HEK293 (cell line): ENCODE measurements at regions of chr7 and their contacts with region 1.

Region 1: DNA sequence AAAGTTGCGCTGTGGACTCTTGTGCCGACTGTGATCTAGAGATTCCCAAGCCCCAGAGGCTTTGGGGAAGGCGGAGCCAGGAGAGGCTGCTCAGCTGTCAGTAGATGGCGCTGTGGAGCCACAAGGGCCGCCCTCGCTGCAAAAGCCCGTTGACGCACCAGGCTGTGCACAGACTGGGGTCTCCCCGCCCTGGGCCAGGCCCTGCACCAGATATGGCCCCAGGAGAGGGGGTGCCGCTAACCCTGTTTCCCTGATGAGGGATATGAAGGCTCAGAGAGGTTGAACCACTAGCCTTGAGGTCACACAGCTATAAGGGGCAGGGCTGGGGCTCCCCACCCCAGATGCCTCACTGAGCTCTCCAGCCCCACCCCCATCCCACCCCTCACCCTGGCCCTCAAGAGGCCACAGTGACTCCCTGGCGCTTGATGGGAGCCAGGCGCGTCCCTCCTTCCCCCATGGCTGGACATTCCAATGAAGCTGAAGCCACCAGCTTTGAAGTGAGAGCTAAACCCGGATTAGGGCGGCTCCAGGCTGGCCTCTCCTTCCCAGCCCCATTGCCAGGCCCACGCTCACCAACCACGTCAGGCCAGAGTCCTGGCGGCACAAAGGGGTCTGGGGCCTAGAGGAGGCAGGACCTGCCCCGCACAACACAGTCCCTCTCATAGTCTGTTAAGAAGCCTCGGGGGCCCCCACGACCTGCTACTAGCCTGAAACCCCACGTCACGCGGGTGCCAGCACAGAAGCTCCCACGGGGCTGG is 26.4 kb downstream of the MYL10 start:
- H3K4me3 ChIP-seq: no peak overlapping the region
- H3K27ac ChIP-seq: no peak overlapping the region
- H3K4me1 ChIP-seq: no peaks in the 10 kb centered on the region
- CTCF ChIP-seq: peak; percentile 68; the same call in 1 of the 2 replicates

Region 2: DNA sequence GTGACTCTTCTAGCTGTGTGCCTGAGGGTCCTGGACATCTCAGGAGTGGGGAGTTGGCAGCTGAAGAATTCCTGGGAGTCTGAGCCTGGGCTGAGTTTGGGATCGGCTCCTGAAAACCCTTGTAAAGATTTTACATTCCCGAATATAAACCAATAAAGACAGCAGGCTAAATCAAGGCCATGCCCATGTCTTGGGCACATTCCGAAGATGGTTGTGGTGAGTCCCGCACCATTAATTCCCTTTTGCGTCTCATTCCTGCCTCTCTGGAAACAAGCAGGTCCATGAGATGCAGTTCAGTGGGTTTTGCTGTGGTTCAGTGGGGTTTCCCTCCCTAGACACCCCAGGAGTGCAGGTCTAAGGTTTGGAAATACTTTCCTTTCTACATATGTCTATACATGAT is 149.0 kb before region 1 on chr7:
- CTCF ChIA-PET with region 1: no interaction called
- POLR2A ChIA-PET with region 1: no interaction called
- H3K4me3 ChIP-seq: no peak overlapping the region
- H3K27ac ChIP-seq: no peak overlapping the region
- H3K4me1 ChIP-seq: no peaks in the 10 kb centered on the region
- CTCF ChIP-seq: no peak

Region 3: DNA sequence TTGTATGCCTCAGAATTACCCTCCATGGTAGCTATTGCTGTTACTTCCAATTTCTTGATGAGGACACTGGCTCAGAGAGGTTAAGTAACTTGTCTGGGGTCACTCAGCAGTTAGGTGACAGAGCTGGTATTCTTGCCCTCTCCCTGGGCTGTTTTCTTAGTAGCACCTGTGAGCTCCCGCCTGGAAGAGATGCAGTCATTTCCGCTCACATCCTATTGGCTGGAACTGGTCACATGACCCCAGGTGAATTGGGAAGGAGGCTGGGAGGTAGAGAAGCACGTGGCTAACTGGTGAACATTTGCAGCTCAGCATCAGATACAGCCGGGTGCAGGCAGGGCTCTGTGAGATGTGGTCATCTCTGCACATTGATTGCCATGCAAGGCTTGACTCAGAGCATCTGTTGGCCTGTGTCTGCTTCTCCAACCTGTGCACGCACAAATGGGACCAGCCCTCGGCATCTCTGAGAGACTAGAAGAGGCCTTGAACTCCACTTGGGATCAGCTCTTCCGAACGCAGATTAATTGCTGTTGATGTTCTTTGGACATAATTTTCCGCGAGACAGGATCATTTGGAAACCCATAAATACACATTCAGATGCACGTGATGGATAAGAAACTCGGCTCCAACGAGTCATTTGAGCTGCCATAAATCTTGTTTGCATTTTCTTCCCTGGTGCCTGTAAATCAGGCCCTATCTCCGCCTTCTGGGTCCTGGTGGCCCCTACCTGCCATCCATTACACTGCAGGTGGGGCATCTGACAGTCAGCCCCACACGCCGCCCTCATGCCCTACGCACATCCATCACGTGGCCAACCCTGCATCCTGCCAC is 16.4 kb before region 1 on chr7:
- CTCF ChIA-PET with region 1: interaction called, 11 read pairs
- POLR2A ChIA-PET with region 1: no interaction called
- H3K4me3 ChIP-seq: no peak overlapping the region
- H3K27ac ChIP-seq: no peak overlapping the region
- H3K4me1 ChIP-seq: no peaks in the 10 kb centered on the region
- CTCF ChIP-seq: no peak

Region 4: DNA sequence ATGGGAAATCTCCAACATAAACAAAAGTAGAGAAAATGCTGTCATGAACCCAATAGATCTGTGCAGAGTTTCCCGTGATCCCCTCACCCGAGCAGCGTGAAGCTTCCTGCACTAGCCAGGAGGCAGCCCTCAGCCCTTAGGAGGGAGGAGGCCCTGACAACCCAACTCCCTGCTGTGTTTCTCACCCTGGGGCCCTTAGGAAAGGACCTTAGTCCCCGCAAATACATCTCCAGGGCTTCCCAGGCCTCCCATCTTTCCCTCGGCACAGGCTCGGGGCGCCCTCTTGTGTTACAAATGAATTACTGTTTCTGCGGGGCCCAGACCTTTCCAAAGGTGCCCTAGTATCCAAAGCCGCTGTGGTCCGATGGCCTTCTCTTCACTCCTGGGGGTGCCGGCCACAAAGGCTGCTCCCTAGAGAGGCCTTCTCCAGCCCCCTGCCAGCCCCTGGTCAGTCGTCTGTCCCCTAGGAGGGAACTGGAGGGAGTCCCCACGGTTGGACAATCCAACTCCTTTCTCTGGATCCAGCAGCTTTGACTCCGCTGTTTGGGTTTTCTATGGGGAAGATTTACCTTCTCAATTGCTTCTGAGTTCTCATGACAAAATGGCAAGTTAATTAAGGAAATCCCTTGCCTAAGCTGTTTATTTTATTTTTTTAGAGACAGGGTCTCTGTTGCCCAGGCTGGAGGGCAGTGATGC is 634.1 kb after region 1 on chr7:
- CTCF ChIA-PET with region 1: interaction called, 15 read pairs
- POLR2A ChIA-PET with region 1: no interaction called
- H3K4me3 ChIP-seq: no peak overlapping the region
- H3K27ac ChIP-seq: no peak overlapping the region
- H3K4me1 ChIP-seq: no peaks in the 10 kb centered on the region
- CTCF ChIP-seq: peak; percentile 51

Region 5: DNA sequence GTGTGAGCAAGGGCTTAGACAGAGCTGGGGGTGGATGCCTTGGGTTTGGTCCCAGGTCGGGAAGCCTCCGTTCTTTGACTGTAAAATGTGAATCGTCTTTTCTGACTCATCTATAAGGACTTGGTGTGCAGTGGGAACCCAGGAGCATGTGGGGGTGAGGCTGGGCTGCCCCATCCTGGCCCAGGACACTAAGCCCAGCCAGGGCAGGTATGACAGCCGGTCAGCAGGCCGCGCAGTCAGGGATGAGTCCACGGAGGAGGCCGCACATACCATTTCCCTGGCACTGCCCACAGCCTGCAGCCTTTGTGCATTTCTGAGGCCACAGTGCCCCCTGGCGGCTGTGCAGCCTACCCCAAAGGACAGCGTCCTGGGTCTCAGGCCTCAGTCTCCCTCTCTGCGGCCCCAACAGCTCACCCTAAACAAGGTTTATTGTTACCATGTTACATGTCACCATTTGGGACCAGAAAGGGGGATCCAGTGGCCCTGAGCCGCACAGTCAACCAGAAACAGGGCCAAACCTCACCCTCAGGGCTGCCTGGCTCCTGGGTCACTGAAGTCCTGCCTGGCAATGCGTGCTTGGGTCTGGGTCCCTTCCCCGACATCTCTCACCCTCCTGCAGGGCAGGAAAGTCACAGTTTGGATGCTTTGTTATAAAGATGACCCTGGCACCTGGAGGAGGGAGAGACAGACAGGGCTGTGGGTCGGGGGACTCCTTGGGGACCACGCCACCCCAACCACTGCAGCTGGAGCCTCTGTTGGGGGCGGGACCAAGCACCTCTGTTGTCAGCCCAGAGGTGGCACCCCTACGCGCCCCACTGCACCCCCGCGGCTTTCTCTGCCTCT is 669.6 kb after region 1 on chr7:
- CTCF ChIA-PET with region 1: interaction called, 39 read pairs
- POLR2A ChIA-PET with region 1: interaction called, 7 read pairs
- H3K4me3 ChIP-seq: no peak overlapping the region
- H3K27ac ChIP-seq: no peak overlapping the region
- H3K4me1 ChIP-seq: no peaks in the 10 kb centered on the region
- CTCF ChIP-seq: peak; percentile 93